ENCODE measurements at regions of chr1 and their contacts with region 1.

Region 1: GRCh38 chr1:173429471-173430402 is 47.4 kb upstream of the PRDX6 start:
- DNase-seq: peak; percentile 94 to 95
- ATAC-seq: peak; percentile 95
- H3K4me3 ChIP-seq: peak overlapping the region in 1 of 2 donors; percentile 8
- H3K27ac ChIP-seq: peak overlapping the region; percentile 82 to 94
- H3K4me1 ChIP-seq: peaks cover 0 to 3% of the 10 kb centered on the region in 2 donors
- H3K27me3 ChIP-seq: no peaks in the 10 kb centered on the region

Region 2: DNA sequence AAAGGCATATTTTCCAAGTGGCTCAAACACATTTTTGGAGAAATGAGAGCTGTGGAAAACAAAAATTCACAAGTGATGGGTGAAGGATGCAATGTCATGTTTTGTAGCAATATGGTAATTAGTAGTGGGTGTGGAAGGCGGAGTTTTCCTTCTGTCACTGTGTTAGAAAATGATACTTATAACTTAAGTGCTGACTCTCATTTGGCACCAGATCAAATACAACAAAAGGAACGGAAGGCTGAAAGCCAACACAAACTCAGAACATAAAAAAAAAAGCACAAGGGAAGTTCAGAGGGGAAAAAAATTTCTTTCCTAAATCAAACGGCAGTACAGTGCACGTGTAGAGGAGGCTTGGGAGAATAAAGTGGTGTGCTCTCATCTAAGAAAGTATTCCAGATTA is 378.9 kb before region 1 on chr1 and contains the start of gene TNFSF18:
- intact Hi-C with region 1: no loop called
- DNase-seq: no peak
- ATAC-seq: peak; percentile 38
- H3K4me3 ChIP-seq: no peak within 1 kb of the TSS
- H3K27ac ChIP-seq: no peak within 1 kb of the TSS
- H3K4me1 ChIP-seq: no peaks in the 10 kb centered on the region
- H3K27me3 ChIP-seq: no peaks in the 10 kb centered on the region
- total RNA-seq, gene TNFSF18: 0.29 to 0.36 TPM

Region 3: GRCh38 chr1:173476664-173477285 is 47.0 kb after region 1 on chr1:
- intact Hi-C with region 1: loop called (anchors 2 kb)
- DNase-seq: peak; percentile 95 to 96
- ATAC-seq: peak; percentile 94
- H3K4me3 ChIP-seq: peak overlapping the region; percentile 4 to 83
- H3K27ac ChIP-seq: peak overlapping the region; percentile 20 to 52
- H3K4me1 ChIP-seq: no peaks in the 10 kb centered on the region
- H3K27me3 ChIP-seq: no peaks in the 10 kb centered on the region

Region 4: GRCh38 chr1:173603056-173603620 is 173.4 kb after region 1 on chr1 and contains the start of gene SLC9C2:
- intact Hi-C with region 1: loop called in 1 of 2 experiments (anchors 10 kb)
- DNase-seq: no peak
- ATAC-seq: no peak
- H3K4me3 ChIP-seq: peak within 1 kb of the TSS; percentile 23 to 41
- H3K27ac ChIP-seq: no peak within 1 kb of the TSS
- H3K4me1 ChIP-seq: no peaks in the 10 kb centered on the region
- H3K27me3 ChIP-seq: peaks cover 0 to 1% of the 10 kb centered on the region in 2 donors
- total RNA-seq, gene SLC9C2: not detected

Region 5: GRCh38 chr1:173714759-173715537 is 285.2 kb after region 1 on chr1 and contains the start of gene KLHL20:
- intact Hi-C with region 1: loop called in 1 of 2 experiments (anchors 2 kb)
- DNase-seq: peak; percentile 87 to 91
- ATAC-seq: peak; percentile 97
- H3K4me3 ChIP-seq: peak within 1 kb of the TSS; percentile 49 to 81
- H3K27ac ChIP-seq: peak within 1 kb of the TSS; percentile 61 to 88
- H3K4me1 ChIP-seq: no peaks in the 10 kb centered on the region
- H3K27me3 ChIP-seq: no peaks in the 10 kb centered on the region
- total RNA-seq, gene KLHL20: 28.5 to 35.2 TPM

Region 6: DNA sequence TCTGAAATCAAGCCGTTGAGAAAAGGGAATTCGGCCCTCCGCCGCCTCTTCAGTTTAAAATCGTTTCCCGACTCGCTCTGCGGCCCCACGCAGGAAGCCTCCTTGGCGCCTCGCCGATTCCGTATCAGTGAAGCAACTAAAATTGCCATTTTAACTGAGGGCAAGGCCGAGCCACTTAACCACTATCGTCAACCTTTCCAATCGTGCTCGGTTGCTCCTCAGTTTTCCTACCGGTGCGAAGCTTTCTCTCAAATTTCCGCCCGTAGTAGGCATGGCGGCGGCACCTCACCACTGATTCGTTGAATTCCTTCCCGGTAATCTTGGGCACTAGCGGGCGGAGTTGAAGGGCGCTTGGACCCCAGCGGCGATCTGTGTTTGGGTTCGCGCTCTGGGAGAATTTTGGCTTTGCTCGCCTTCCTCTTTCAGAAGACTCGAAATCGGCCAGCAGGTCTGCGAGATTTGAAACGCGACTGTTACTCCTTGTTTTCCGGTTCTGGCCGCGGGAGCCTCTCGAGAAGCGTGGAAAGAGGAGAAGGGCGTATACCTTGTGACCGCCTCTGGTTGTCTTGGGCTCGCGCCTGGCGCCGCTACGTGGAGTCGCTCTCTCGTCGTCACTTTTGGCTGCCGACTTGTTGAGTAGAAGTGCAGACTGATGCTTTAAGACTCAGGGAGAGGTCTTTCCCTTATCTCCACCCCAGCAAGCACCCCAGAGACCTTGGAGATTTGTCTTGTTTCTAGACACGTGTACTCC is 394.8 kb after region 1 on chr1 and contains the starts of genes CENPL and DARS2:
- intact Hi-C with region 1: loop called in 1 of 2 experiments (anchors 5 kb)
- DNase-seq: peak; percentile 98
- ATAC-seq: peak; percentile 100
- H3K4me3 ChIP-seq: peak within 1 kb of the TSS; percentile 53 to 98
- H3K27ac ChIP-seq: peak within 1 kb of the TSS; percentile 46 to 92
- H3K4me1 ChIP-seq: peaks cover 0 to 2% of the 10 kb centered on the region in 2 donors
- H3K27me3 ChIP-seq: no peaks in the 10 kb centered on the region
- total RNA-seq, gene CENPL: 4.5 to 4.8 TPM
- total RNA-seq, gene DARS2: 8.6 to 10.0 TPM

Region 7: DNA sequence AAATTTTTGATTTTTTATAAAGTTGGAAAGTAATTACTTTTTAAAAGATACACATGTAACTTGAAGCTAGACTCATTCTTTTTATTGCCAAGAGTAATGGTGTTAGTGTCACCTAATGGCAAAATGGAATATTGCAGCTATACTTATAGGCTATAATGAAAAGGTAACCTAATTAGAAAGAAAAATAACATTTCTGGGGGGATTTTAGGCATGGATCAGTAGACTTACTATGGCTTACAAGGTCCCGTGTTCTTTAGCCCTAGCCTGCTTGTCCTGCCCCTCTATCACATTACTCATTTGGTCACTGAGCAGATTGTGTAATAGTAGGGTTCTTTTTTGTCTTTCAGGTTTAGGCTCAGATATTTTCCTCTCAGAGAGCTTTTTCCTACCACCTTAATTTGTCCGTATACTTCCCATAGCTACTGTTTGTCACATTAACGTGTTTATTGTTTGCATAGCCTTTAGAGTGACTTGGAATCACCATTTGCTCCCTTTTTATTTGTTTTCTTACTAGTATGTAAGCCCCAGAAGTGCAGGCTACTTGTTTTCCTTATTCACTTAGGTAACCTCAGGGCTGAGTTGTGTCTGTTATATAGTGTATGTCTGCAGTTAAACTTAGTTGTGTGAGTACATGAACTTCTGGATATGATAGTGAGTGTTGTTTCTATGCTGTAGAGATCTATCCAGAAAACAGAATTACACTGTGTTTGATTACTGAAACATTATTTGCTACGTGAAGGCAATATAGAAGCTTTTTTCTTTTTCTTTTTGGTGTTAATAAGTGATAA is 788.2 kb after region 1 on chr1:
- intact Hi-C with region 1: loop called in 1 of 2 experiments (anchors 10 kb)
- DNase-seq: no peak
- ATAC-seq: no peak
- H3K4me3 ChIP-seq: no peak overlapping the region
- H3K27ac ChIP-seq: no peak overlapping the region
- H3K4me1 ChIP-seq: no peaks in the 10 kb centered on the region
- H3K27me3 ChIP-seq: no peaks in the 10 kb centered on the region

Measured in aorta (tissue), 5 donors.